ENCODE measurements at regions of chr2 and their contacts with region 1.

Region 1: DNA sequence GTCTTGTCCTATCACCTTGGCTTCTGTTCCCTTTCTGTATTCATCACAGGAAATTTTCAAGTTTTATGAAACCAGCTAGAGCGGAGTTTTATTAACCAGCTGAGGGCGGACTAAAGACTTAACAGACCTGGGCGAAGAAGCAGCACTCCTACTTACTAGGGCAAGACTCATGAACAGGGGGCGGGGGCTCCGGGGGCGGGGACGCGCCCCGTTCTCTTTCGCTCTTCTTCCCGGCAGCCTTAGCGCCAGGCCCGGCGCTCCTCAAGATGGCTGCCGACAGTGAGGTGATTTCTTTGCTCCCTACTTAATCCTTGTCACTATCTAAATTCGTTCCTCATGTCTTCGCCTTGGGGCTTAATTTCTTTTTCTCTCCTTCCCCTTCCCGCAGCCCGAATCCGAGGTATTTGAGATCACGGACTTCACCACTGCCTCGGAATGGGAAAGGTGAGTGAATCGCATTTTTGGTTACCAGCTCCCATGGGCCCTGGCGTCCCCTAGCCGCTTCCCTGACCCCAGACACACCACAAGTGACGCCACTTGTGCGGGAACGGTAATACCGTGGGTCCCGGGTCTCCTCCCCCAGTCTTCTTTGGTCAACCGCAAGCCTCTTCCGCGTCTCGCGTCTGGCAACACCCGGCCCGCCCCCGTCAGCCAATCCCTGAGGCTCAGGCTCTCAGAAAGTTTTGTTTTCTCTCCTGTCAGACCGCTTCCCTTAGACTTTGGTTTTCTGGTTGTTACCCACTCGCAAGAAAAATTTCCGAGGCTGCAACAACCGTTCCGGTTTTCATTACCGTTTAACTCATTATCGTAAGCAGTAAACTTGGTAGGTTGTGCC is at the start of gene RAB3GAP1:
- DNase-seq: peak; percentile 90
- H3K4me3 ChIP-seq: peak within 1 kb of the TSS; percentile 54 to 99 (median 87)
- H3K27ac ChIP-seq: peak within 1 kb of the TSS; percentile 83
- H3K4me1 ChIP-seq: peaks cover 30% of the 10 kb centered on the region
- H3K27me3 ChIP-seq: peaks cover 0 to 3% of the 10 kb centered on the region in 2 experiments
- CTCF ChIP-seq: no peak
- POLR2A ChIP-seq: peak; percentile 95
- total RNA-seq, gene RAB3GAP1: 37.2 and 39.5 TPM in 2 replicates

Region 2: DNA sequence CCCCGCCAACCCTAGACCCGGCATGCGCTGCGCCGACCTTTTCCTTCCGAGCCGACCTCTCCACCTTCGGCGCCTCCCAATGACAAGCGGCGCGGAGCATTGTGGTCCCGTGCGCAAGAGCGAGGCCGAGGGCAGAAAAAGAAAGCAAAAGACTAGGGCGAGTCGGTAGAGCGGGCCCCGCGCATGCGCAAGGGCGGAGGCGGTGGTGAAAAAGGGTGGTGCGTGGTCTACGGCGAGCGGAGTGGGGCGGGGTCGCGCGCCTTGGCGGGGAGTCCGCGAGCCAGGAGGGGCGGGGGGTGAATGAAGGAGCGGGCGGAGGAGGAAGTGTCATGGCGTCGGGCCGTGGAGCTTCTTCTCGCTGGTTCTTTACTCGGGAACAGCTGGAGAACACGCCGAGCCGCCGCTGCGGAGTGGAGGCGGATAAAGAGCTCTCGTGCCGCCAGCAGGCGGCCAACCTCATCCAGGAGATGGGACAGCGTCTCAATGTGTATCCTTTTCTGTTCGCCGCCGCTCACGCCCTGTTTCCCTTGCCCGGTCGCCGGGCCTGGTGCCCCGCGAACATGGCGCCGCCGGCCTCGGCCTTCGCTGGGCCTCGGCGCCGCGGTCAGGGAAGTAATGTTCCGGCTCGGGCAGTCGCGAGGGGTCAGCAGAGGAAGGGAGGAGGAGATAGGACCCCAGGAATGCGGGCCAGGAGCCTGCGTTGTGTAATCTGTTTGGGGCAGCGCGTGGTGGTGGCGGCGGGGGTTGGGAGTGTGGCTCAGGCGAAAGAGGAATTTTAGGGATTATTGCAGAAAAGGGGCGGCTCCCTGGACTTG is 133.5 kb before region 1 on chr2 and contains the start of gene CCNT2:
- CTCF ChIA-PET with region 1: no interaction called
- POLR2A ChIA-PET with region 1: no interaction called
- dilution Hi-C with region 1: no loop called
- intact Hi-C with region 1: loop called (anchors 2 kb)
- DNase-seq: peak; percentile 99
- H3K4me3 ChIP-seq: peak within 1 kb of the TSS; percentile 93 to 100 (median 100)
- H3K27ac ChIP-seq: peak within 1 kb of the TSS; percentile 91
- H3K4me1 ChIP-seq: peaks cover 17% of the 10 kb centered on the region
- H3K27me3 ChIP-seq: no peaks in the 10 kb centered on the region
- CTCF ChIP-seq: no peak
- POLR2A ChIP-seq: peak; percentile 63
- total RNA-seq, gene CCNT2: 35.4 and 35.5 TPM in 2 replicates

Region 3: GRCh38 chr2:135132314-135132713 is 80.1 kb after region 1 on chr2:
- CTCF ChIA-PET with region 1: no interaction called
- POLR2A ChIA-PET with region 1: no interaction called
- dilution Hi-C with region 1: no loop called
- intact Hi-C with region 1: no loop called
- DNase-seq: no peak
- H3K4me3 ChIP-seq: no peak overlapping the region
- H3K27ac ChIP-seq: no peak overlapping the region
- H3K4me1 ChIP-seq: no peaks in the 10 kb centered on the region
- H3K27me3 ChIP-seq: no peaks in the 10 kb centered on the region
- CTCF ChIP-seq: no peak
- POLR2A ChIP-seq: no peak

Measured in endothelial cell of umbilical vein (primary cell).